Natural killer cell (primary cell): ENCODE measurements at regions of chr5 and their contacts with region 1.

Region 1: GRCh38 chr5:61055434-61056006 is 106.7 kb downstream of the SMIM15 start:
- DNase-seq: peak in 1 of 2 donors; percentile 57
- ATAC-seq: peak in 1 of 3 donors; percentile 53
- H3K4me3 ChIP-seq: no peak overlapping the region
- H3K4me3 Mint-ChIP-seq: no peak overlapping the region
- H3K27ac ChIP-seq: no peak overlapping the region
- H3K27ac Mint-ChIP-seq: no peak overlapping the region
- H3K4me1 ChIP-seq: no peaks in the 10 kb centered on the region
- H3K4me1 Mint-ChIP-seq: no peaks in the 10 kb centered on the region
- H3K27me3 ChIP-seq: no peaks in the 10 kb centered on the region
- H3K27me3 Mint-ChIP-seq: no peaks in the 10 kb centered on the region
- CTCF ChIP-seq: peak; percentile 50

Region 2: GRCh38 chr5:61301341-61302199 is 246.1 kb after region 1 on chr5:
- intact Hi-C with region 1: no loop called
- DNase-seq: no peak
- ATAC-seq: no peak
- H3K4me3 ChIP-seq: no peak overlapping the region
- H3K4me3 Mint-ChIP-seq: no peak overlapping the region
- H3K27ac ChIP-seq: no peak overlapping the region
- H3K27ac Mint-ChIP-seq: no peak overlapping the region
- H3K4me1 ChIP-seq: no peaks in the 10 kb centered on the region
- H3K4me1 Mint-ChIP-seq: no peaks in the 10 kb centered on the region
- H3K27me3 ChIP-seq: no peaks in the 10 kb centered on the region
- H3K27me3 Mint-ChIP-seq: peaks cover 7 to 17% of the 10 kb centered on the region in 2 donors
- CTCF ChIP-seq: no peak

Region 3: DNA sequence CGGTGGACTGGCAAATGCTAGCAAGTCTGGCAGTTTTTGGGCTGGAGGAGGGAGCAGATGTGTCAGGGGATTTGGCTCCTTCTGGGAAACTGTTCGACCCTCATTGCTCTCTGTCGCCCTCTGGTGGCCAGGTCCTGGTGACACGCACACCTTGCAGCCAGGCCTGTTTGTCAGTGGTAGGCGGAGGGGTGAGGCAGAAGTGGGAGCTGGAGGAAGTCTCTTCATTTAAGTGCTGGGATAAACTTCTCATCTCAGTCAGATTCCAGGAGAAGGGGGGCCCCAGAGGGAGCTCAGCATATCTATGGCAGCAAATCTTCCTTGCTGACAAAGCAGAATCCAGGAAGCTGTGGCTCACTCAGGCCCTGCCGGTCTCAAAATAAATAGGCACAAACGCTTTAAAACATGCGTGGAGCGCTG is 603.1 kb after region 1 on chr5:
- intact Hi-C with region 1: loop called (anchors 1 kb)
- DNase-seq: peak; percentile 71 to 86
- ATAC-seq: peak; percentile 77 to 91 (median 77)
- H3K4me3 ChIP-seq: no peak overlapping the region
- H3K4me3 Mint-ChIP-seq: no peak overlapping the region
- H3K27ac ChIP-seq: no peak overlapping the region
- H3K27ac Mint-ChIP-seq: no peak overlapping the region
- H3K4me1 ChIP-seq: no peaks in the 10 kb centered on the region
- H3K4me1 Mint-ChIP-seq: no peaks in the 10 kb centered on the region
- H3K27me3 ChIP-seq: no peaks in the 10 kb centered on the region
- H3K27me3 Mint-ChIP-seq: peaks cover 10 to 15% of the 10 kb centered on the region in 2 donors
- CTCF ChIP-seq: peak; percentile 91